Activated CD4-positive, alpha-beta memory T cell treated with anti-CD3 and anti-CD28 coated beads for 36 hours (primary cell): ENCODE measurements at regions of chr3 and their contacts with region 1.

Region 1: DNA sequence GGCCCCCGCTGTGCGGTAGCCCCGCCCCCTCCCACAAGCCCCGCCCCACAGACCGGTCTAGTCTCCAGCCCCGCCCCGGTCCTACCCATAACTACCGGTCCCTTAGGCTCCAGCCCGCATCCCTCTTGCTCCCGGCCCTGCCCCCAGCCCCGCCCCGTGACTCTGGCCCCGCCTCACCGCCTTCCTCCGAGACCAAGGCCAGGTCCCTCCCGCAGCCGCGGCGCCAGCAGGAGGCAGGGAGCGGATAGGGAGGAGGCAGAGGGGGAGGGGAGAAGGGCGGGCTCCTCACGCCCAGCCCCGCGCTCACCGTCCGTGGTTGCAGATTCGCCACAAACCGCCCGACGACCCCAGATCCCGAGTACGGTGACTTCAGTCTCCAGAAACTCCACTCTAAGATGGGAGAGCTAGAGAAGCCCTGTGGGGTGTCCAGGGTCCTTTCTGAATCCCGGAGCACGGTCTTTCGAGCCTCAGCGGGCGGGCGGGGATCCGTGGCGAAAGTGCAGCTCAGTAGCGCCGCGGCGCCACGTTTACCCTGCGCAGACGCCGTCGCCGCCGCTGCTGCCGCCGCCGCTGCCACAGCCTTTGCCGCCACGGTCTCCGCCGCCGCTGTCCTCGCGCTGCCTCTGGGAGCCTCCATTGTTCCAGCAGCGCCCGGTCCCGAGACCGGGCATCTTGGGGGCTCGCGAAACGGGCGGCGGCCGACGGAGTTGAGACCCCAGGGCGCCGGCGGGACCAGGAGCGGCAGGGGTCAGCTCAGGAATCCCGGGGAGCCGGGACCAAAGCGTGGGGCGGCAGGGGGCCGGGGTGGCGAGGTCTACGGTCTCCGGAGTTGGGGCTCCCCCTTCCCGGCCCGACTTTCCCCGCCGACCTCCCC is at the start of gene BRPF1:
- DNase-seq: peak; percentile 100
- H3K4me3 Mint-ChIP-seq: peak within 1 kb of the TSS; percentile 88
- H3K27ac Mint-ChIP-seq: peak within 1 kb of the TSS; percentile 96
- H3K4me1 Mint-ChIP-seq: peaks cover 72% of the 10 kb centered on the region
- H3K27me3 Mint-ChIP-seq: no peaks in the 10 kb centered on the region
- total RNA-seq, gene BRPF1: 25.0 to 27.3 TPM

Region 2: DNA sequence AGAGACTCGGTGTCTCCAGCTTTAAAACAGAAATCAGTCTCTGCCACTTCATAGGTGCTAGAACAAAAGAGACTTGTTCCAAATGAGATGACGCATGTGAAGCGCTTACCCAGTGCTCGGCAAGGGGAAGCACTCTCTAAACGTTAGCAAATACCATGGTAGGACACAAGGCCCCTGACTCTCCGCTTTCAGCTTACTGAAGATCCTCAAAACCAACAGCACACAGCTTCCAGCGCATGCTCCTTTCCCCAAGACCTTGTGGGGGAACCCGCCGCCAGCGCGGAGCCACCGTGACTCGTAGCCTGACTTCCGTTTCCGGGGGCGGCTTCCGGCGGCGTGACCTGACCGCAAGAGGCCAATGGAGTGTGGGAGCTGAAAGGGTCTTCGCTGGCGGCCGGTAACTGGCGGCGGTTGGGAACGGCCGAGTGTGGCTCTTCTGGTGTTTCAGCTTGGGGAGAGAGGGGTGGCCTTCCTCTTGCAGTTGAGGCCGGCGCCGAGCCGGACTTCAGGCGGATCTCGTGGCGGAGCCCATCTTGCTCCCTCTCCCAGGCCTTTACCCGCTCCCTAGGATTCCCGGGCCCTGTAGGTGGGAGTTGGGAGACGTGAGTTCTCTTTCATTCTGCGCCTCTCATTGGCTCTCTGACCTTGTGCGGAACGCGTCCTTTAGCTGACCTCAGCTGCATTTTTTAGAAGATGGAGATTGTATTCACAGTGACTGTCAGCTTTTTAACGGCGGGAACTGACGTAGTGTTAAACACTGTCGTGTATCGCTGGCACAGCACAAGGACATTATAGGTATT is 368.5 kb before region 1 on chr3 and contains the start of gene THUMPD3:
- CTCF ChIA-PET with region 1: interaction called, 4 read pairs
- POLR2A ChIA-PET with region 1: no interaction called
- intact Hi-C with region 1: loop called (anchors 2 kb)
- DNase-seq: peak; percentile 96
- H3K4me3 Mint-ChIP-seq: peak within 1 kb of the TSS; percentile 95
- H3K27ac Mint-ChIP-seq: peak within 1 kb of the TSS; percentile 98
- H3K4me1 Mint-ChIP-seq: peaks cover 21% of the 10 kb centered on the region
- H3K27me3 Mint-ChIP-seq: no peaks in the 10 kb centered on the region
- total RNA-seq, gene THUMPD3: 55.8 to 60.6 TPM

Region 3: GRCh38 chr3:9649791-9650521 is 81.5 kb before region 1 on chr3:
- CTCF ChIA-PET with region 1: interaction called, 8 read pairs
- POLR2A ChIA-PET with region 1: no interaction called
- intact Hi-C with region 1: loop called (anchors 1 kb)
- DNase-seq: no peak
- H3K4me3 Mint-ChIP-seq: peak overlapping the region; percentile 95
- H3K27ac Mint-ChIP-seq: peak overlapping the region; percentile 73
- H3K4me1 Mint-ChIP-seq: peaks cover 29% of the 10 kb centered on the region
- H3K27me3 Mint-ChIP-seq: no peaks in the 10 kb centered on the region

Region 4: DNA sequence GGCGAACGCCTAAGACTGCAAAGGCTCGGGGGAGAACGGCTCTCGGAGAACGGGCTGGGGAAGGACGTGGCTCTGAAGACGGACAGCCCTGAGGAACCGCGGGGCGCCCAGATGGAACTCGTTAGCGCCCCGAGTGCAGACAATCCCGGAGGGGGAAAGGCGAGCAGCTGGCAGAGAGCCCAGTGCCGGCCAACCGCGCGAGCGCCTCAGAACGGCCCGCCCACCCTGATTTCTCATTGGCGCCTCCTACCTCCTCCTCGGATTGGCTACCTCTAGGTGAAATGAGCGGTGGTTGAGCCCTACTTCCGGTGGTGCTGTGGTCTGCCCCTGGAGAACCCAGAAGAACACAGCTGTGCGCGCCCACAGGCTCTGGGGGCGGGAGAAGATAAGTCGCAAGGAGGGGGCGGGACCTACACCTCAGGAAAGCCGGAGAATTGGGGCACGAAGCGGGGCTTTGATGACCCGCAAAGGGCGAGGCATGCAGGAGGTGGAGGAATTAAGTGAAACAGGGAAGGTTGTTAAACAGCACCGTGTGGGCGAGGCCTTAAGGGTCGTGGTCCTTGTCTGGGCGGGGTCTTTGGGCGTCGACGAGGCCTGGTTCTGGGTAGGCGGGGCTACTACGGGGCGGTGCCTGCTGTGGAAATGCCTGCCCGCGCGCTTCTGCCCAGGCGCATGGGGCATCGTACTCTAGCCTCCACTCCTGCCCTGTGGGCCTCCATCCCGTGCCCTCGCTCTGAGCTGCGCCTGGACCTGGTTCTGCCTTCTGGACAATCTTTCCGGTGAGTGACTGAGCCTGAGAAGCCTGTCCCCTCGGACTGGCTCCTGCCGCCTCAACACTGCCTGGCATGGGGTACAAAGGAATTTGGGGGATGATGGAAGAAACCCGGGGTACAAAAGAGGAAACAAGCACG is 18.5 kb after region 1 on chr3 and contains the start of gene OGG1:
- CTCF ChIA-PET with region 1: interaction called, 12 read pairs
- POLR2A ChIA-PET with region 1: interaction called, 3 read pairs
- intact Hi-C with region 1: loop called (anchors 1 kb)
- DNase-seq: peak; percentile 98
- H3K4me3 Mint-ChIP-seq: peak within 1 kb of the TSS; percentile 96
- H3K27ac Mint-ChIP-seq: peak within 1 kb of the TSS; percentile 88
- H3K4me1 Mint-ChIP-seq: peaks cover 50% of the 10 kb centered on the region
- H3K27me3 Mint-ChIP-seq: no peaks in the 10 kb centered on the region
- total RNA-seq, gene OGG1: 35.7 to 36.5 TPM